Activated naive CD4-positive, alpha-beta T cell treated with anti-CD3 and anti-CD28 coated beads for 36 hours (primary cell): ENCODE measurements at regions of chr5 and their contacts with region 1.

Region 1: DNA sequence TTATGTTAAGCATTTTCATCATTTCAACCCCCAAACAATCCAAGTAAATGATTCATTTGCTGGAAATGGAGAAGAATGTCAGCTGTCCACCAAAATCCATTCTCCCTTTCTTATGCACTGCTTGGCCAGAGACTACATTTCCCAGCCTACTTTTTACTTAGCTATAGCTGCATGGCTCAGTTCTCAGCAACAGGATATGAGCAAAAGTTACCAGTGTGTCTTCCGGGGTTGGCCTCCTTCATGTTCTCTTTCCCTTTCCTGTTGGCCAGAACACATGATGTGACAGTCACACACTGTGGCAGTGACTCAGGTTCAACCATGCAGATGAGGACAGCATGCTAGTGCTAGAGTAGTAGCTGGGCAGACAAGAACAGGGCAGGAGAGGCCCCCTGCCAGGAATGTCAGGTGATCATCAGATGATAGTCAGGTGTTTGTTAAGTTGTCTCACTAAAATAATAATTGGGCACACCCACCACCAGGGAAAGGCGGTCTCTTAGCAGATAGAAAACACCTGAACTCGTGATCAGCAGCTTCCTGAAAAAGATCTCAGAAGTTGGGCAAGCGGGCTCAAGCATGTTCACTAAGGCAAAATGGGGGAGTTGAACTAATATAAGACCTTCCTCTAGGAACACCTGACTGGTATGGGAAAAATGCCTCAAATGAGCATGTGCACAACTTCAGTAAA is 12.2 kb downstream of the GPR150 start:
- DNase-seq: peak; percentile 89
- H3K4me3 Mint-ChIP-seq: peak overlapping the region; percentile 53
- H3K27ac Mint-ChIP-seq: peak overlapping the region; percentile 94
- H3K4me1 Mint-ChIP-seq: peaks cover 20% of the 10 kb centered on the region
- H3K27me3 Mint-ChIP-seq: no peaks in the 10 kb centered on the region

Region 2: DNA sequence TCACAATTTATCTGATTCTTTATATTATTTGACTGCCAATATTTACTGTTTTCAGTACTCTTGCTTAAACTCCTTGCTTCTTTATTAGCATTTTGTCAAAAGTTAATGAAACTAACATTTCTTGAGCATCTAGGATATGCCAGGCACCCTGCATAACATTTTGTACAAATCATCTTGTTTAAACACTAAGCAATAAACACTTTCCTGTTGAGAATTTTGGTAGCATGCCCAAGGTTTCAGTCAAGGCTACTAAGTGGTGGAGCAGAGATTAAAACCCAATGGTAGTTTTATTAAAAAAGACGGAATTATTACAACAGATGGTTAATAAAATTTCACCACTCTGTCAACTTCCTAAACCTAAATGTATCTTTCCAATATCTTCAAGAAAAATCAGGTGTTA is 120.5 kb before region 1 on chr5:
- CTCF ChIA-PET with region 1: no interaction called
- intact Hi-C with region 1: no loop called
- DNase-seq: no peak
- H3K4me3 Mint-ChIP-seq: no peak overlapping the region
- H3K27ac Mint-ChIP-seq: no peak overlapping the region
- H3K4me1 Mint-ChIP-seq: no peaks in the 10 kb centered on the region
- H3K27me3 Mint-ChIP-seq: no peaks in the 10 kb centered on the region

Region 3: GRCh38 chr5:95620030-95620869 is 11.9 kb before region 1 on chr5 and contains the start of gene GPR150:
- CTCF ChIA-PET with region 1: interaction called, 18 read pairs
- intact Hi-C with region 1: no loop called
- DNase-seq: peak; percentile 69
- H3K4me3 Mint-ChIP-seq: peak within 1 kb of the TSS; percentile 82
- H3K27ac Mint-ChIP-seq: peak within 1 kb of the TSS; percentile 17
- H3K4me1 Mint-ChIP-seq: peaks cover 36% of the 10 kb centered on the region
- H3K27me3 Mint-ChIP-seq: no peaks in the 10 kb centered on the region
- total RNA-seq, gene GPR150: 0.64 to 0.94 TPM

Region 4: DNA sequence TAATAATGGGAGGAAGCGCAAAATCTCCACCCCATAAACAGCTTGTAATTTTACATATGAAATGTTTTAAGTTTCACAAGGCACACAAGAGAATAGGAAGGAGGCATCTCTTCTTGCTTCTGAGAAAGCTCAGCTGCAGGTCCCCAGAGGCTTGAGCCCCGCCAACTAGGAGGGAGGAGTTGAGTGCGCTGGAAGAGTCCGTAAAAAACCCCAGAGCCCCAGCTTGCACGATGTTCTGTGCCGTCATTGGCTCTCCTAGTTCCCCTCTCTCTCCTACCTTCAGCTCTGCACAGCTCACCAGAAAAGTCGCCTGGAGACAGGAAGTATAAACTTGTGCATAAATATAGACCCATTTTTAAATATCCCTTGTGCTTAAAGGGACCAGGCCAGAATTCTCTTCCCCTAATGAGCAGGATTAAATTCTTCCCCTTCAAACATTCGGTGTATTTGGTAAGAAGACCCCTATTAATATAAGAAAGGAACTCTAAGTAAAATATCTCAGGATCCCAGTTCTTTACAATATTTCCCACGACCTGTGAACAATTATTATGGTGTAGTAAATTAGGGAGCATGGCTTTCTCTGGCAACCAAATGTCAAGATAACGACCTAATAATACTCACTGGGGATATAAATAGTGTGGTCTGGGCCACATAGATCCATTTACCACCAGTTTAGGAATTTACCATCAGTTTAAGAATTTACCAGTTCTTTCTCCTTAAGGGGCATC is 176.7 kb after region 1 on chr5:
- CTCF ChIA-PET with region 1: no interaction called
- intact Hi-C with region 1: loop called (anchors 1 kb)
- DNase-seq: peak; percentile 92
- H3K4me3 Mint-ChIP-seq: peak overlapping the region; percentile 57
- H3K27ac Mint-ChIP-seq: peak overlapping the region; percentile 81
- H3K4me1 Mint-ChIP-seq: peaks cover 55% of the 10 kb centered on the region
- H3K27me3 Mint-ChIP-seq: no peaks in the 10 kb centered on the region

Region 5: DNA sequence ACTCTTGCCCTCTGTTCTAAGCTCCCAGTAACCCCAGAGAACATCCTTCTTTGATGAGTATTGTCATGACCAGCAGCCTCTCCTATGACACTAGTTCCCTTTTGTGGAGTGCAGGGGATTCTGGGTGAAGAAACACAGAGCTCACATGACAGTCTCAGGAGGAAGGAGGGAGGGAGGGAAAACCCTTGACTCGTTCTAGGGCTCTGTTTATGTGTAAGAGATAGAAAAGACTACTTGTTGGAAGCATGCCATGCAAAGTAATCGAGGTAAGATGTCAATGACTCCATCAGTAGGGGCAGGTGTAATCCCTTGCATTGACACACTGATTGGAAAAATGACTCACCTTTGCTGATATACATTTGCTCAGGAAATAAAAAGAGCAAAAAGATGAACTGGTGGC is 519.8 kb after region 1 on chr5:
- CTCF ChIA-PET with region 1: no interaction called
- intact Hi-C with region 1: loop called (anchors 1 kb)
- DNase-seq: peak; percentile 63
- H3K4me3 Mint-ChIP-seq: no peak overlapping the region
- H3K27ac Mint-ChIP-seq: peak overlapping the region; percentile 10
- H3K4me1 Mint-ChIP-seq: peaks cover 6% of the 10 kb centered on the region
- H3K27me3 Mint-ChIP-seq: no peaks in the 10 kb centered on the region